Esophagus squamous epithelium (tissue), 5 donors: ENCODE measurements at regions of chr22 and their contacts with region 1.

Region 1: DNA sequence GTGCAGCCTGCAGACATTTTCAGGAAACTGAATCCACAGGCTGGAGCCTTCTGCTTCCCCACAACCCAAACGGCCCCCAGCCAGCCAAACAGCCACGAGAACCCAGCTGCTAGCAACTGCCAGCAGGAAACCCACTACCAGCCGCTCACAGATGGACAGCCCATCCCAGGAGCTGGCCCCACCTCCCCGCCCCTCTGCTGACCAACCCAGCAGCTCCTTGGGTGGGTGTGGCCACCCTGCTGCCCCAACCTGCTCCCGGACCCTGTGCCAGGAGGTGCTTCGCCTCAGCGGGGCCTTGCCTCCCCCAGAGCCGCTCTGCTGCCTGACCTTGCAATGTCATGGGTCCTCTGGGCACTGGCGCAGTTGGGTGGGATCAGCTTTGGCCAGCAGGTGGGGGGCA is 8.2 kb upstream of the CCDC188 start:
- DNase-seq: no peak
- H3K4me3 ChIP-seq: no peak overlapping the region
- H3K27ac ChIP-seq: no peak overlapping the region
- H3K4me1 ChIP-seq: peaks cover 0 to 11% (median 0%) of the 10 kb centered on the region in 3 donors
- H3K27me3 ChIP-seq: peaks cover 0 to 55% (median 0%) of the 10 kb centered on the region in 4 donors
- CTCF ChIP-seq: no peak
- POLR2A ChIP-seq: no peak

Region 2: DNA sequence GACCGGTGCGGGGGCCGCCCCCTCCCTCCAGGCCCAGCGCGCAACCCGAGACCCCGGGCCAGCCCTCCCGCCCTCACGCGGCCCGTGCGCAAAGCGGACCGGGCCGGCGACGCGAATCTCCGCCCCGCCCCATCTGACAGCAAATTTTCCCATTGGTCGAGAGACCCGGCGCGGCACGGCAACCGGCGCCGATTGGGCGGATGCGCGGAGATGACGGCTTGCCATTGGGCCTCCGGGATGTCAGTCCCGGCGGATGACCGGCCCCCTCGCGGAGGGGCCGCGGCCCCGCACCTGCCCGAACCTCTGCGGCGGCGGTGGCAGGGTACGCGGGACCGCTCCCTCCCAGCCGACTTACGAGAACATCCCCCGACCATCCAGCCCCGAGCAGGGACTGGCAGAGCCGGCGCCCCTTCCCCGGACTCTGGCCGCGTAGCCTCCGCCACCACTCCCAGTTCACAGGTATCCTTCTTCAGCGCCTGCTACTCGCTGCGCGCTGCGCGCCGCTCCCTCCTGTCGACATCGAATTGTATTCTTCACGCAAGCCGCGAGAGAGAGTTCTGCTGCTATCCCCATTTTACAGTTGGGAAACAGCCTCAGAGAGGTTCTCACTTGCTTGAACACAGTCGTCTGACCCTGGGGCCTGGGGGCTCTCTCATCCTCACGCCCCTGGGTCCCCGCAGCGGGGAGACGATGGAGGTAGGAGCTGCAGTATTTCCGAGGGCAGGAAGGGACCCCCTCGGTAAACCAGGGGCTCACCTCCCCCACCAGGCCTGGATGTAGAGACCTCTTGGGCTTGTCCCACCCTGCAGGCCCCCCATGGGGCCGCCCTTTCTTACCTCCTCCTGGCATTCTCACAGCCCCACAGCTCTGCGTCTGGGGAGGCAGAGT is 142.1 kb before region 1 on chr22 and contains the start of gene ARVCF:
- intact Hi-C with region 1: no loop called
- DNase-seq: no peak
- H3K4me3 ChIP-seq: peak within 1 kb of the TSS; percentile 60 to 90 (median 77)
- H3K27ac ChIP-seq: peak within 1 kb of the TSS in 2 of 4 donors; percentile 33 to 46
- H3K4me1 ChIP-seq: peaks cover 18 to 51% (median 19%) of the 10 kb centered on the region in 3 donors
- H3K27me3 ChIP-seq: peaks cover 0 to 35% (median 0%) of the 10 kb centered on the region in 4 donors
- CTCF ChIP-seq: peak in 4 of 6 experiments; percentile 5 to 46 (median 42)
- POLR2A ChIP-seq: no peak
- total RNA-seq, gene ARVCF: 3.1 to 10.9 (median 7.1) TPM

Region 3: DNA sequence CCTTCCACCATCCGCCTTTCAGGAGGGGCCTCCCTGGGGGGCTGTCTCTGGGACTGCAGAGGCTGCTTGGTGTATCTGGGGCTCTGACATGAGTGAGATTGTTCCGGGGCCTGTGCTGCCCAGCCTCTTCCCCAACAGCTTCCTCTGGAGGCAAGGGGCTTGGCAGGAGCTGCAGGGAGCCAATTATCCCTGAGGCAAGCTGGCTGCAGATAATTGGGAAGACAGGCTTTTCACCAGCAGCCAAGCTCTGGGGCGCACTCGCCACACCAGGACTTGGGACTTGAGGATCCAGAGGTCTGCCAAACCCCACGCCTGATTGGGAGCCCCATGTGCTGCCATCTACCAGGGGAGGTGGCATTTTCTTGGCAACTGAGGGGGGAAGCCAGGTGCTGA is 124.6 kb after region 1 on chr22:
- intact Hi-C with region 1: loop called (anchors 2 kb)
- DNase-seq: no peak
- H3K4me3 ChIP-seq: no peak overlapping the region
- H3K27ac ChIP-seq: no peak overlapping the region
- H3K4me1 ChIP-seq: no peaks in the 10 kb centered on the region
- H3K27me3 ChIP-seq: peaks cover 0 to 13% (median 0%) of the 10 kb centered on the region in 4 donors
- CTCF ChIP-seq: no peak
- POLR2A ChIP-seq: no peak

Region 4: DNA sequence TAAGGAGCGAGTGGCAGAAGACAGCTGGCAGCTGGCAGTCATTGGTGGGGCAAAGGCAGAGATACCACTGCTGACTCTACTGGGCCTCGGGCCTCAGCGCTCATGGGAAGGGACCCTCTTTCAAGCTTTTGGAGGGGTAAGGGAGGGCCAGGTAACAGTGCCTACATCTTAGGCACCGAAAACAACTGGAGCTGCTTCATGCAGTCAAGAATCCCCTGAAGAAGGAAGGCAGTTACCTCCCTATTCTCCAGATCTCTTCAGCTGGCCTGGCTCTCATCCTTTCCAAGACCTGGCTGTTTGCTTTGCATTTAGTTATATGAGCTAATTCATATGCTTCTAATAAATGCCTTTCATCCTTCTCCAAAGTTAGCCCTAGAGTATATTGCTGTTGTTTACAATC is 219.0 kb after region 1 on chr22:
- intact Hi-C with region 1: no loop called
- DNase-seq: no peak
- H3K4me3 ChIP-seq: no peak overlapping the region
- H3K27ac ChIP-seq: no peak overlapping the region
- H3K4me1 ChIP-seq: peaks cover 0 to 8% (median 0%) of the 10 kb centered on the region in 3 donors
- H3K27me3 ChIP-seq: no peaks in the 10 kb centered on the region
- CTCF ChIP-seq: no peak
- POLR2A ChIP-seq: no peak